Motor neuron (in vitro differentiated cells): ENCODE measurements at regions of chr1 and their contacts with region 1.

Region 1: DNA sequence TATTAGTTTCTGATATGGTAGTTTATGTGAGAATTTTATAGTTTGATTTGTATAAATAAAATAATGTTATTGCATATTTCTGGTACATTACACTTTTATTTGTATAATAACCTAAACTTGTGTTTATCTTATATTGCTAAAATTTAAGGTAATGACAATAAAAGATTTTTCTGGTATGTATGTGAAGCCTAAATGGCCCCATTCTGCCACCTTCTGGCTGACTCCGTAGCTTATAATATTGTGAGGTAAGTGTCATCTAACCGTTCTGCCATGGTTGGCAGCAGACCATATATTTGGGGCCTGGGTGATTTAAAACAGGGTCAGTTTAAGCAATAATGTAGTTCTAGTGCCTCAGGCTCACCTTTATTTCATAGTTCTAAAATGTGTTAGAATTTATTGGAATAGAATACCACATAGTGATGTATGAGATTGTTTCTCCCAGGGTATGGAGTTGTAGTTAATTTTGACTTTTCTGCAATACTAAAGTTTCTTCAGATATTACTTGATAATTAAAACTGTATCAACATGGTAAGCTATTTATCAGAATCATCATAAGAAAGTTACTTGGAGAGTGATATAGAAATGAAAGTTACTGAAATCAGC is 21.2 kb upstream of the PRKACB start:
- ATAC-seq: peak in 4 of 8 experiments; percentile 46 to 74 (median 67)
- H3K4me3 ChIP-seq: no peak overlapping the region
- H3K27ac ChIP-seq: no peak overlapping the region
- H3K4me1 ChIP-seq: no peaks in the 10 kb centered on the region

Region 2: GRCh38 chr1:83931658-83932253 is 191.1 kb before region 1 on chr1:
- in situ Hi-C with region 1: loop called in 4 of 9 experiments (anchors 10 to 25 kb)
- ATAC-seq: peak; percentile 51 to 78 (median 67)
- H3K4me3 ChIP-seq: no peak overlapping the region
- H3K27ac ChIP-seq: no peak overlapping the region
- H3K4me1 ChIP-seq: no peaks in the 10 kb centered on the region

Region 3: DNA sequence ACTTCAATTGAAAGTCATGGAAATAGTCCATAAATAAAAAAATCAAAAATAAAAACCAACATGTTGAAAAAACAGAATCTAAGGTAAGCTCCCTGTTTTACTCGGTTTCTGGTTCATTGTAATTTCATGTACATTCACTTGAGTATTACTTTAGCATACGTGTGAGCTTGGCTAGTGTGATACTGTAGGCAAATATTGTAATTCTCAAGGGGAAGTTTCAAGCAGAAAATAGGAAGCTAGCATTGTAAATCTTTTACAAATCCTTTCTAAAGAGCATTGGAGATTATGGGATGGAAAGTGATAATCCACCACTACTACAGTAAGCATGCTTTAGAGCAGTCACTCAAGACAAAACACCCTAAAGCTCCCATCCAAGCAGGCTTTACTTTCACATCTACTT is 773.4 kb after region 1 on chr1:
- in situ Hi-C with region 1: no loop called
- ATAC-seq: no peak
- H3K4me3 ChIP-seq: no peak overlapping the region
- H3K27ac ChIP-seq: no peak overlapping the region
- H3K4me1 ChIP-seq: peaks cover 0 to 3% of the 10 kb centered on the region in 2 donors